Endothelial cell of umbilical vein (primary cell): ENCODE measurements at regions of chr6 and their contacts with region 1.

Region 1: GRCh38 chr6:144284783-144285547 is at the start of gene UTRN:
- DNase-seq: peak; percentile 83
- H3K4me3 ChIP-seq: peak within 1 kb of the TSS; percentile 83 to 93 (median 88)
- H3K27ac ChIP-seq: peak within 1 kb of the TSS; percentile 89
- H3K4me1 ChIP-seq: peaks cover 14% of the 10 kb centered on the region
- H3K27me3 ChIP-seq: no peaks in the 10 kb centered on the region
- CTCF ChIP-seq: no peak
- POLR2A ChIP-seq: peak; percentile 73
- total RNA-seq, gene UTRN: 224 and 228 TPM in 2 replicates

Region 2: GRCh38 chr6:144265390-144265789 is 19.6 kb before region 1 on chr6:
- CTCF ChIA-PET with region 1: interaction called, 5 read pairs
- POLR2A ChIA-PET with region 1: no interaction called
- dilution Hi-C with region 1: no loop called
- intact Hi-C with region 1: loop called (anchors 1 kb)
- DNase-seq: peak; percentile 64
- H3K4me3 ChIP-seq: no peak overlapping the region
- H3K27ac ChIP-seq: peak overlapping the region; percentile 82
- H3K4me1 ChIP-seq: peaks cover 28% of the 10 kb centered on the region
- H3K27me3 ChIP-seq: no peaks in the 10 kb centered on the region
- CTCF ChIP-seq: no peak
- POLR2A ChIP-seq: no peak

Region 3: DNA sequence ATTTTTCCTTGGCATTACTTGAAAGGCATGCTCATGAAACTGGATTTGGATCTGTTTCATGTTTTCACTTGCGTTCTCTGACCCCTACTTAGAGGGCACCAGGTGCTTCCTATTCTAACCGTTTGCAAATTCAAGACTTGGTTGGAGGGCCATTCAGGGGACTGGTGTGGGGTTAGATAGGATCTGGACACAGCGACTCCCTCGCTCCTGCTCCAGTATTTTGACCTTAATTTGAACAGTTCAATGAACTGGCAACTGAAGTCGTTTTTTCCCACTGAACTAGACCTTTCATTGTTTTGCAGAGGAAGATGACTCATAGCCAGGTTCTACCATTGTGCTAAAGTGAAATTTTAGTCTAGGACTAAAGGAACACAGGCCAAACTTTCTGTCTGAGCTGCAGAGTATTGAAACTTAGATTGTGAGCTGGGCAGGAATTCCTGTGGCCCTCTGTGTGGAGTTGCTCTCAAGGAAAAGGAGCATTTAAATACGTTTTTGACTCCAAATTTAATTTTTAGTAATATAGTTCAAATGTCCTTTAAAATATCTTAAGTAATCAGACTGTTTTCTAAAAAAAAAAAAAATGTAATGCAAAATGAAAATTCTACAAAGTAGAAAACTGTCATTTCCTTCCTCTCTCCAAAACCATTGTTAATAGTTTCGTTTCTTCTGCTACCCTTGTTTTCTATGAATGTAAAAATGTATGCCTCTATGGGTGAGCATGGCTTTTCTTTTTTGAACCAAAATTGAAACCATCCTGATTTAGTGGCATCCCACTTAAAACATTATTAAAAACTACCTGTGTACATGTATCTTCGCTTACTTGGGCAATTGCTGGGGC is 64.9 kb after region 1 on chr6:
- CTCF ChIA-PET with region 1: interaction called, 7 read pairs
- POLR2A ChIA-PET with region 1: interaction called, 4 read pairs
- dilution Hi-C with region 1: no loop called
- intact Hi-C with region 1: loop called (anchors 1 kb)
- DNase-seq: peak; percentile 100
- H3K4me3 ChIP-seq: peak overlapping the region in 2 of 3 experiments; percentile 28 to 74
- H3K27ac ChIP-seq: peak overlapping the region; percentile 90
- H3K4me1 ChIP-seq: peaks cover 69% of the 10 kb centered on the region
- H3K27me3 ChIP-seq: no peaks in the 10 kb centered on the region
- CTCF ChIP-seq: no peak
- POLR2A ChIP-seq: peak; percentile 61

Region 4: GRCh38 chr6:144434308-144434990 is 149.5 kb after region 1 on chr6:
- CTCF ChIA-PET with region 1: interaction called, 11 read pairs
- POLR2A ChIA-PET with region 1: interaction called, 4 read pairs
- dilution Hi-C with region 1: no loop called
- intact Hi-C with region 1: loop called (anchors 1 kb)
- DNase-seq: peak; percentile 89
- H3K4me3 ChIP-seq: no peak overlapping the region
- H3K27ac ChIP-seq: peak overlapping the region; percentile 43
- H3K4me1 ChIP-seq: peaks cover 14% of the 10 kb centered on the region
- H3K27me3 ChIP-seq: no peaks in the 10 kb centered on the region
- CTCF ChIP-seq: no peak
- POLR2A ChIP-seq: no peak